ENCODE measurements at regions of chr17 and their contacts with region 1.

Region 1: DNA sequence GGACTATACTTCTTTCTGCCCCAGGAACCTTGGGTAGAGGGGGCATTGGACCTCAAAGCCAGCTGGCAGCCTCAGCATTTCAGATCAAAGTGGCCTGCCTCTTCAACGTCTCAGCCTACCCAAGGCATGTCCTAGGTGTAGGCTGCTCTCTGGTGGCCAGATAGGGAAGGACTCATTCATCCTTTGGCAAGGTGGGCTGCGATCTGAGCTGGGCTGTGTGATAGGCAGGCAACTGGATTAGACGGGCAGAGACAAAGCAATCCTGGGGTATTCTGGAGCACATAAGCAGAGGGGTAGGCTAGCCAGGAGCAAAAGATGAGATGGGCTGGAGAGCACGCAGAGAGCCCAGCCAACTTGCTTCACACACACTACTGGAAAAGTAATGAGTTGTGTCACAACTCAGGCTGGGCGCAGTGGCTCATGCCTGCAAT is 8.8 kb upstream of the NAGLU start:
- DNase-seq: peak; percentile 63
- H3K4me3 ChIP-seq: no peak overlapping the region
- H3K27ac ChIP-seq: no peak overlapping the region
- H3K4me1 ChIP-seq: peaks cover 40% of the 10 kb centered on the region
- H3K27me3 ChIP-seq: no peaks in the 10 kb centered on the region
- CTCF ChIP-seq: peak; percentile 86 to 93

Region 2: DNA sequence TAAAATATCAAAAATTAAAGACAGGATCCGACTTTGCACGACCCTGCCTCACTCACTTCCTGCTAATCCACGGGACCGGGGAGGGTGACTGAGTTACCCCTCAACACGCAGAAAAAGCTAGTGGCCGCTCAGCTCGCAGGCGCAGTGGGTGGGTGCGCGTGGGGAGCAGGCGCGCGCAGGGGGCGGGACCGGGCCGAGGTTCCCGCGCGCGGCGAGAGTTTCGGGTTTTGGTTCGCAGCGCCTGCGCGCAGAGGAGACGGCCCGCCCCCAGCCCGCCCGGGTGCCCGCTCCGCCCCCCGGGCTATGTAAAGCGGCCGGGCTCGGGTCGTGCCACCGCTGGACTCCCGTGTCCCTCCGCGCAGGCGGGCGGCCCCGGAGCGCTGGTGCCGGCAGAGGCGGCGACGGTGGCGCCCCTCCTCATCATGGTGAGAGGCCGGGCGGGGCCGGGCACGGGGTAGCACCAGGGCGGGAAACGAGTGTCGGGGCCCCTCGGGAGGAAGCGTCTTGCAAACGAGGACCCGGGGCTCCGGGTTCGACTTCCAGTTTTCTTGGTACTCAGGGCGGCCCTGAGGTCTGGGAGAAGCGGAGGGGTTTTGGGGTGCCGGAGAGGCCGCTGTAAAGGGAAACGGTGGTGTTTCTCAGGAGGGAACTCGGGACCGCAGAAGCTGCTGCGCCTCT is 560.7 kb before region 1 on chr17 and contains the start of gene CNP:
- CTCF ChIA-PET with region 1: no interaction called
- dilution Hi-C with region 1: no loop called
- in situ Hi-C with region 1: no loop called
- intact Hi-C with region 1: loop called (anchors 2 kb)
- DNase-seq: peak; percentile 92
- H3K4me3 ChIP-seq: peak within 1 kb of the TSS; percentile 77 to 93 (median 80)
- H3K27ac ChIP-seq: peak within 1 kb of the TSS; percentile 82
- H3K4me1 ChIP-seq: peaks cover 25% of the 10 kb centered on the region
- H3K27me3 ChIP-seq: no peaks in the 10 kb centered on the region
- CTCF ChIP-seq: no peak
- total RNA-seq, gene CNP: 61.7 to 72.6 TPM

Region 3: GRCh38 chr17:42067351-42068091 is 459.8 kb before region 1 on chr17:
- CTCF ChIA-PET with region 1: no interaction called
- dilution Hi-C with region 1: no loop called
- in situ Hi-C with region 1: no loop called
- intact Hi-C with region 1: loop called (anchors 5 kb)
- DNase-seq: no peak
- H3K4me3 ChIP-seq: no peak overlapping the region
- H3K27ac ChIP-seq: no peak overlapping the region
- H3K4me1 ChIP-seq: peaks cover 4% of the 10 kb centered on the region
- H3K27me3 ChIP-seq: peaks cover 7% of the 10 kb centered on the region
- CTCF ChIP-seq: peak; percentile 88 to 93

Region 4: DNA sequence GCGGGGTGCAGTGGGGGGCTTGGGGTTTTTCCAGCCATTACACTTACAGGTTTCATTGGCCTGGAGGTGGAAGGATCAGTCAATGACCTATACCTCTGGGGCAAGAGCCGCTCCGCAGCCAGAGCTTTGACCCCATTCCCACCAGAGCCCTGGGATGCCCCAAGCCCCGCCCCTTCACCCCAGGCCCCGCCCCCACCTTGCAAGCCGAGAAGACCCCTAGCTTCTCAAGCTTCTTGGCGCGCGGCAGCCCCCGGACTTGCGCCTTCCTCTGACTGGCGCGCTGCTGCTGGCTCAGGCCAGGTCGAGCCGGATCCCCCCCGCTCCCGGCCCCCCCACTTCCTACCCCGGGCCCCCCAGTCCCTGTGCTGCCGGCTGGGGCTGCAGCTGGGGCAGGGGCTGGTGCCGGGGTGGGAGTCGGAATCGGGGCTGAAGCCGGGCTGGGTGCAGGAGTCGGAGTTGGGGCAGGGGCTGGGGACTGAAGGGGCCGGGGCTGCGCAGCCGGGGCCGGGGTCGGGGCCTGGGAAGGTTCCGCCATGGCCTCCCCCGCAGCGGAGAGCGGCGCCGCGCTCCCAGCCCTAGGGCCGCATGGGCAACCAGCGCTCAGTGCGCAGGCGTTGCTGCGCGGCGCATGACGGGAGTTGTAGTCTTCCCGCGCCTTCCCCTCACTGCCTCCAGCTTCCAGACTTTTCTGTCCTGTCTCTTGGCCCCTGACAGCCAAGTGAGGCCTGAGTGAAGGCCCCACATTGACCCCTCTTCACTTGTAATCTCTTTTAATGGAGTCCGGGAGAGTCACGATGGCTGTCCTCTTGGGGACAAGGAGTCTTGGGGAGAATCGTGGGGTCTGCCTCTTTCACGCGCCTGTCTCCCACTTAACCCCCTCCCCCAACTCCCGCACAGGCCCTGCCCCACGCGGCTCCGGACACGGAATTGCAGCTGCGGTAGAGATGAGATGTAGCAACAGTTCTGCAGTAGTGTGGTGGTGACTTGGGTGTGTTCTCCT is 406.2 kb before region 1 on chr17 and contains the start of gene KAT2A:
- CTCF ChIA-PET with region 1: no interaction called
- dilution Hi-C with region 1: no loop called
- in situ Hi-C with region 1: loop called in 1 of 2 experiments (anchors 10 kb)
- intact Hi-C with region 1: loop called (anchors 2 kb)
- DNase-seq: peak; percentile 71
- H3K4me3 ChIP-seq: peak within 1 kb of the TSS; percentile 44 to 62 (median 52)
- H3K27ac ChIP-seq: no peak within 1 kb of the TSS
- H3K4me1 ChIP-seq: peaks cover 6% of the 10 kb centered on the region
- H3K27me3 ChIP-seq: no peaks in the 10 kb centered on the region
- CTCF ChIP-seq: no peak
- total RNA-seq, gene KAT2A: 12.7 to 30.4 TPM

Region 5: DNA sequence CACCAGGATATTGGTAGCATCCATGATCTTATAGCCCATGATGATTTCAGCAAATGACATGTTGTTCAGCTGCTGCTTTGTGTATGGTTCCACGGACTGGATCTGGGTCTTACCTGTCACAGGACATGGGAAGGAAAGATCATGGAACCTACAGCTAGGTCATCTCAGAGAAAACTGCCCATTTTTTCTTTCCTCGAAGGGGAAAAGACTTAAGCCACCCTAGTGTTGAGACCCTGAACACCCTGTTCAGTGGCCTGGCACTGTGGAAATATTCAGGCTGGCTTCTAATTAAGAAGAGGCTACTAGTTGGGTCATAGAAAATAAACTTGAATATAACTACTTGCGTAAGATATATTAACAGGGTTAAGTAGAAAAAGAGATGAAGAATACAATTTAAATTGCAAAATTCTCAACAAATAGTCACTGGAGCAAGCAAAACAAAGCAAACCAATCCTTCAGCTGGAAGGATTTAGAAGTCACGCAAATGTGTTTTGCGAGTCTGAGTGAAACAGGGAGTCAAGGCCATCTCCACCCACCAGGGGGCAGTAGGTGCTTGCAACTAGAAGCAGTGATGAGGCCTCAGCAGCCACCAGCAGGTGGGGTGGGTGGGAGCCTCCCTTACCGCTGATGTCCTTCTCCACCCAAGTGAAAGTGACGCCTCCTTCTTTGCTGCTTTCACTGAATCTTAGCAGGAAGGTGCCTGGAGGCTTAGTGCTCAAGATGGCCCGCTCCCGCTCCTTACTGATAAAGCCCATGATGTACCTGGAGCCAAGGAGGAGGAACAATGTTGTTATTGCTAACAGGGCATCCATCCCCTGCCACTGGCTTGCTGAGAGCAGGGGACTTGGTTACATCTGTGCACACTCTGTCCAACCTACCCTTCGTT is 204.7 kb before region 1 on chr17:
- CTCF ChIA-PET with region 1: interaction called, 5 read pairs
- dilution Hi-C with region 1: no loop called
- in situ Hi-C with region 1: loop called (anchors 5 to 10 kb)
- intact Hi-C with region 1: loop called (anchors 1 kb)
- DNase-seq: peak; percentile 78
- H3K4me3 ChIP-seq: no peak overlapping the region
- H3K27ac ChIP-seq: no peak overlapping the region
- H3K4me1 ChIP-seq: peaks cover 29% of the 10 kb centered on the region
- H3K27me3 ChIP-seq: no peaks in the 10 kb centered on the region
- CTCF ChIP-seq: peak; percentile 100

Region 6: GRCh38 chr17:42428141-42428944 is 98.9 kb before region 1 on chr17:
- CTCF ChIA-PET with region 1: interaction called, 5 read pairs
- dilution Hi-C with region 1: loop called (anchors 5 kb)
- in situ Hi-C with region 1: no loop called
- intact Hi-C with region 1: loop called (anchors 1 kb)
- DNase-seq: peak; percentile 98
- H3K4me3 ChIP-seq: peak overlapping the region in 1 of 3 experiments; percentile 22
- H3K27ac ChIP-seq: peak overlapping the region; percentile 64
- H3K4me1 ChIP-seq: peaks cover 11% of the 10 kb centered on the region
- H3K27me3 ChIP-seq: no peaks in the 10 kb centered on the region
- CTCF ChIP-seq: peak; percentile 85 to 95

Region 7: DNA sequence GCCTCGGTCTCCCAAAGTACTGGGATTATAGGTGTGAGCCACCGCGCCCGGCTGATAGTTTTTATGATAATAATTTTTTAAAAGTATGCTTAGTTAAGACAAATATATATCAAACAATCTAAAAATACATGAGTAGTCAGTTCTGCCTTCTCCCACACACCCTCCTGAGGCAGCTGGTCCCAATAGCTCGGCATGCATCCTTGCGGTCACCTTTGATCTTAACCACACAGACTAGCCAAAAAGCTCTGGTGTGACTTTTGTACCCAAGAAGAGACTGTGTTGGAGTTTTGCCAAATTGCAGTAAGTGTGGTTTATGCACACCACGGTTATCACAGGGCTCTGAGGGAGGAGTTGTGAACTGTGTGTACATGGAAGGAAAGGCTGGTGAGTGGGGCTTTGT is 43.0 kb before region 1 on chr17:
- CTCF ChIA-PET with region 1: no interaction called
- dilution Hi-C with region 1: no loop called
- in situ Hi-C with region 1: no loop called
- intact Hi-C with region 1: no loop called
- DNase-seq: no peak
- H3K4me3 ChIP-seq: no peak overlapping the region
- H3K27ac ChIP-seq: no peak overlapping the region
- H3K4me1 ChIP-seq: no peaks in the 10 kb centered on the region
- H3K27me3 ChIP-seq: no peaks in the 10 kb centered on the region
- CTCF ChIP-seq: no peak

Region 8: DNA sequence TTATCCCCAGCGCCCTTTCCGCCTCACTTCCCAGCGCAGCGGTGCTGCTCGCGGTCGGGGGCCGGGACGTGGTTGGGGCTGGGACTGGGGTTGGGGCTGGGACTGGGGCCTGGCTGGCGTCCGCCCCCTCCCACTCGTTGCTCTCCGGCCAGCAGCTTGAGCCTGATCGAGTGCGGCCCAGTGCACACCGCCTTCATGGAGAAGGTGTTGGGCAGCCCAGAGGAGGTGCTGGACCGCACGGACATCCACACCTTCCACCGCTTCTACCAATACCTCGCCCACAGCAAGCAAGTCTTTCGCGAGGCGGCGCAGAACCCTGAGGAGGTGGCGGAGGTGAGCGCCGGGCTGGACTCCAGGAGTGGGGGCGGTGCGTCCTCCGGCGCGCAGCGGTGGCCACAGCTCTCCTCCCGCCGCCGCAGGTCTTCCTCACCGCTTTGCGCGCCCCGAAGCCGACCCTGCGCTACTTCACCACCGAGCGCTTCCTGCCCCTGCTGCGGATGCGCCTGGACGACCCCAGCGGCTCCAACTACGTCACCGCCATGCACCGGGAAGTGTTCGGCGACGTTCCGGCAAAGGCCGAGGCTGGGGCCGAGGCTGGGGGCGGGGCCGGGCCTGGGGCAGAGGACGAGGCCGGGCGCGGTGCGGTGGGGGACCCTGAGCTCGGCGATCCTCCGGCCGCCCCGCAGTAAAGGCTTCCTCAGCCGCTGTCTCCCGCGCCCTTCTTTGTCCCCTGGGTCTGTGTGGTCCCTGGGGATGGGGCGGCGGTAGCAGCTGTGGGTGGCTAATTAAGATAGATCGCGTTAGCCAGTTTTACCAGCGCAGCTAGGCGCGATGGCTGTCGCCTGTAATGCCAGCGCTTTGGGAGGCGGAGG is 27.2 kb after region 1 on chr17:
- CTCF ChIA-PET with region 1: interaction called, 8 read pairs
- dilution Hi-C with region 1: no loop called
- in situ Hi-C with region 1: no loop called
- intact Hi-C with region 1: loop called (anchors 2 kb)
- DNase-seq: peak; percentile 65
- H3K4me3 ChIP-seq: peak overlapping the region; percentile 81 to 89 (median 89)
- H3K27ac ChIP-seq: peak overlapping the region; percentile 30
- H3K4me1 ChIP-seq: peaks cover 15% of the 10 kb centered on the region
- H3K27me3 ChIP-seq: no peaks in the 10 kb centered on the region
- CTCF ChIP-seq: no peak

Region 9: GRCh38 chr17:42598905-42599304 is 71.6 kb after region 1 on chr17:
- CTCF ChIA-PET with region 1: no interaction called
- dilution Hi-C with region 1: no loop called
- in situ Hi-C with region 1: no loop called
- intact Hi-C with region 1: no loop called
- DNase-seq: no peak
- H3K4me3 ChIP-seq: no peak overlapping the region
- H3K27ac ChIP-seq: no peak overlapping the region
- H3K4me1 ChIP-seq: no peaks in the 10 kb centered on the region
- H3K27me3 ChIP-seq: no peaks in the 10 kb centered on the region
- CTCF ChIP-seq: no peak